ENCODE measurements at regions of chr12 and their contacts with region 1.

Region 1: DNA sequence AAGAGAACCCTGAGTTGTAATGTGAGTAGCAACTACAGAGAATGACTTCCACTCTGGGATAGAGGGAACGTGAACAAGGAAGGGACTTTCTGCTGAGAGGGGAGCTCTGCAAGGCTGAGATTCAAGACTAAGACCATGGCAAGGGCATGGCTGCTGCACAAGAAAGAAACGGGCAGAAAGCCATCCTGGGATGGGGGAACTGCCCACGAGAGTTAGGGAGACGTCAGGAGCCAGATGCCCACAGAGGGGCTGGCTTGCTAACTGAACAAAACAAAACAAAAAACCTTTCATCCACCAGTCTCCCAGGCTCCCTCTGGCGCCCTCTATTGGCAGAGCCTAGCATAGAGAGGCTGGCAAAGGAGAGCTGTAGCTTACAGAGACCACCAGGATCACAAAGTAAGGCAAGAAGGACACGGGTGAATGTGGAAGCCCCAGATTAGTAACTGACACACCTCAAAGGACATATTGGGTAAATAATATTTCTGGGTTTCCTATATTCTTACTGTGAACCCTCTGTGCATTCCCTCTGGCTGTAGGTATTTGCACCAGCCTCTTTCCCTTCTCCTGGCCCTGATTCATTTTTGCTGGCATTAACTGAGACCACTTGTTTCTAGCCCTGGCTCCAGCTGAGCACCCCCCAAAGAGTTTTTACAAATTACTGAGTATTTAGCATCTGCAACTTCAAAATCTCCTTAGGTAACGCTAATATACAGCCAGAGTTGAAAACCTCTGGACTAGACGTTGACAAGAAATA is 338.3 kb downstream of the EMP1 start:
- DNase-seq: peak in 3 of 5 donors; percentile 24 to 37 (median 36)
- H3K4me3 ChIP-seq: no peak overlapping the region
- H3K27ac ChIP-seq: no peak overlapping the region
- H3K4me1 ChIP-seq: no peaks in the 10 kb centered on the region
- H3K27me3 ChIP-seq: no peaks in the 10 kb centered on the region
- CTCF ChIP-seq: no peak
- EP300 ChIP-seq: no peak
- POLR2A ChIP-seq: no peak

Region 2: GRCh38 chr12:13362260-13362841 is 172.5 kb before region 1 on chr12:
- intact Hi-C with region 1: loop called in 1 of 4 experiments (anchors 10 kb)
- DNase-seq: no peak
- H3K4me3 ChIP-seq: no peak overlapping the region
- H3K27ac ChIP-seq: no peak overlapping the region
- H3K4me1 ChIP-seq: no peaks in the 10 kb centered on the region
- H3K27me3 ChIP-seq: no peaks in the 10 kb centered on the region
- CTCF ChIP-seq: no peak
- EP300 ChIP-seq: no peak
- POLR2A ChIP-seq: no peak

Region 3: DNA sequence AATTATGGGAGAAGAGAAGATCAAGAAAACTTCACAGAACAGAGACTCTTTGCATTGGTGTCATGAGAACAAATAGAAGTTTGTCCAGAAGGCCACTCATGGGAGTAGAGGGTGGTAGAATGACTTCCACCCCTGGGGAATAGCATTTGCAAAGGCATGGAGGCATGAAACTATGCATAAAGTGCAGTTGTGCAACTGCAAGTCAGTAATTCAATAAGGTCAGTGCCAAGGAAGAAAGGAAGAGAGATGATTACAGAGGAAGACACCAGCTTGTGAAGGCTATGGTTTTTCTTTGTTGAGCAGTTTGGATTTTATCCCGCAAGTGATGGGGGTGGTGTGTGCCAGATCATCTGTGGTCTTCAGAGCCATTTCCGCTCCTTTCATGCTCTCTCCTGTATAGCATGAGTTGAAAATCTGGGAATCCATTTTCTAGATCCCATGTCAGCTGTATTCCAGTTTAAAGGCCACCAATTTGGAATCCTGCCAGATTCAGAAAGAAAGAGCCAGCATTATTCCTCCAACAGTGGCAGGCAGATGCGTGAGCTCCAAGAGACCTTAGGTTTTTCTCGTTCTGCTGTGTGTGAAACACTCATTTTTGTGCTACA is 514.2 kb after region 1 on chr12:
- intact Hi-C with region 1: no loop called
- DNase-seq: no peak
- H3K4me3 ChIP-seq: no peak overlapping the region
- H3K27ac ChIP-seq: no peak overlapping the region
- H3K4me1 ChIP-seq: no peaks in the 10 kb centered on the region
- H3K27me3 ChIP-seq: no peaks in the 10 kb centered on the region
- CTCF ChIP-seq: no peak
- EP300 ChIP-seq: no peak
- POLR2A ChIP-seq: no peak

Region 4: GRCh38 chr12:15481846-15482245 is 1947.0 kb after region 1 on chr12:
- intact Hi-C with region 1: no loop called
- DNase-seq: no peak
- H3K4me3 ChIP-seq: no peak overlapping the region
- H3K27ac ChIP-seq: no peak overlapping the region
- H3K4me1 ChIP-seq: no peaks in the 10 kb centered on the region
- H3K27me3 ChIP-seq: no peaks in the 10 kb centered on the region
- CTCF ChIP-seq: no peak
- EP300 ChIP-seq: no peak
- POLR2A ChIP-seq: no peak

Measured in ovary (tissue), 10 donors.